Activated CD4-positive, alpha-beta T cell treated with anti-CD3 and anti-CD28 coated beads, Interleukin-2, amount 10 ng/mL, durations not matched to agents 7 days and 5 days (primary cell): ENCODE measurements at regions of chr15 and their contacts with region 1.

Region 1: DNA sequence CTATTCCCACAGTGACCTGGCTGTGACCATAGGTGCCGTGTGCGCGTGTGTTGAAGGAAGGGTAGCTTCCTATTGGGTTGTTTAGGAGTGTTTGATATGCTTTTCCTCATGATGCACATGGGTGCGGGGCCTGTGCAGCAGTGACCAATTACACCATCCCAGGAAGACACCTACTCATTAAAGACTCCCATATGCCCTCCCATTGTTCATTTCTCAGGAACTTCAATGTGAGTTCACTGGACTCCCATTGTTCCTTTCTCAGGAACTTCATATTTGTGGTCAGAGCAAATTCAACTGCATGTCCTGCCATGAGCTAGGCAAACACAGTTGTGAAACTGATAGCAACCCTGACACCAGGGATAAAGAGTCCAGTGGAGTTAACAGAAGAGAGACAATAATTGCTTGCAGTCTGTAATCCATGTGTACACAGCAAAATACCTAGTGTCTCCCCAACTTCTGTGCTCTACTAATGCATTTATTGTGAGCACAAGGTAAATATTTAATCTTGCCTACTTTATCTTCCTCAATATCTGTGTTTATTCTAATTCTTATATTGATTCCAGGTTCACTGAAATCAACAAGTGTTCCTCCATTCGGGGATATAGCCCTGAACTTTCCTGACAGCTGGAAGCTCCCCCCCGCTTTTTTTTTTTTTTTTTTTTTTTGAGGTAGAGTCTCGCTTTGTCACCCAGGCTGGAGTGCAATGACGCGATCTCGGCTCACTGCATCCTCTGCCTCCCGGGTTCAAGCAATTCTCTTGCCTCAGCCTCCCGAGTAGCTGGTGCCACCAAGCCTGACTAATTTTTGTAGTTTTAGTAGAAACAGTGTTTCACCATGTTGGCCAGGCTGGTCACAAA is 57.5 kb upstream of the GCNT3 start:
- DNase-seq: no peak
- H3K4me3 Mint-ChIP-seq: no peak overlapping the region
- H3K27ac Mint-ChIP-seq: no peak overlapping the region
- H3K4me1 Mint-ChIP-seq: peaks cover 3% of the 10 kb centered on the region
- H3K27me3 Mint-ChIP-seq: peaks cover 5% of the 10 kb centered on the region

Region 2: GRCh38 chr15:59461521-59461920 is 92.6 kb before region 1 on chr15:
- CTCF ChIA-PET with region 1: no interaction called
- POLR2A ChIA-PET with region 1: no interaction called
- DNase-seq: no peak
- H3K4me3 Mint-ChIP-seq: no peak overlapping the region
- H3K27ac Mint-ChIP-seq: no peak overlapping the region
- H3K4me1 Mint-ChIP-seq: no peaks in the 10 kb centered on the region
- H3K27me3 Mint-ChIP-seq: peaks cover 44% of the 10 kb centered on the region

Region 3: GRCh38 chr15:59516655-59517461 is 37.2 kb before region 1 on chr15:
- CTCF ChIA-PET with region 1: no interaction called
- POLR2A ChIA-PET with region 1: no interaction called
- DNase-seq: no peak
- H3K4me3 Mint-ChIP-seq: no peak overlapping the region
- H3K27ac Mint-ChIP-seq: no peak overlapping the region
- H3K4me1 Mint-ChIP-seq: peaks cover 2% of the 10 kb centered on the region
- H3K27me3 Mint-ChIP-seq: peaks cover 14% of the 10 kb centered on the region

Region 4: DNA sequence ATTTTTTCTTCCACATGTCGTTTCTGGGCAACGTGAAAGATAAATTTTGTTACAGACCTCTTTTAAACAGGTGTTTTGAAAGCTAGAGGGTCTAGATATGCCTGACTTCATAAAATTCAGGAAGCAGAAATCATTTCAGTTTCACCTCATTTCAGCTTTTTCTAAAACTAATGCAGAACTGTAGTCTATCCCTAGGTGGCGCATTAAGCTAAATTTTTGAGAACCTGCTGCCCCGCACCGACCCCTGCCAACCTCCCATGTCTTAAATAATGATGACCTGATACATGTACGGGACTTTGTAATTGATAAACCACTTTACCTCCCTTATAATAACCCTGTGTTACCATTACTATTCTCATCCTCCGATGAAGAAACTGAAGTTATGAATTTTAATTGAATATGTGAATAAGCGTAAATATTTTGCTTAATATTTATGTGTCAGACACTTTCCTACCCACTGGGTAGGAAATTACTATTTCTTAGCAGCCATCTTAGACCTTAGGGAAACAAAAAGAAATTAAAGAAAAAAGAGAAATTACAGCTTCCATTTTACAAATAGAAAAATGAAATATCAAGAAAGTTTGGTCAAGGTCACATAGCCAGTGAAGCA is 21.2 kb before region 1 on chr15:
- CTCF ChIA-PET with region 1: interaction called, 11 read pairs
- POLR2A ChIA-PET with region 1: no interaction called
- DNase-seq: peak; percentile 52
- H3K4me3 Mint-ChIP-seq: no peak overlapping the region
- H3K27ac Mint-ChIP-seq: no peak overlapping the region
- H3K4me1 Mint-ChIP-seq: peaks cover 7% of the 10 kb centered on the region
- H3K27me3 Mint-ChIP-seq: peaks cover 8% of the 10 kb centered on the region